B cell (primary cell): ENCODE measurements at regions of chr11 and their contacts with region 1.

Region 1: GRCh38 chr11:14892036-14892567 is at the start of gene CYP2R1:
- DNase-seq: peak; percentile 93
- ATAC-seq: peak; percentile 85
- H3K4me3 ChIP-seq: peak within 1 kb of the TSS; percentile 82 to 91 (median 87)
- H3K4me3 Mint-ChIP-seq: peak within 1 kb of the TSS; percentile 99
- H3K27ac ChIP-seq: peak within 1 kb of the TSS; percentile 78 to 83
- H3K27ac Mint-ChIP-seq: peak within 1 kb of the TSS; percentile 97
- H3K4me1 ChIP-seq: peaks cover 4 to 5% of the 10 kb centered on the region in 2 donors
- H3K4me1 Mint-ChIP-seq: peaks cover 30% of the 10 kb centered on the region
- H3K27me3 ChIP-seq: no peaks in the 10 kb centered on the region
- H3K27me3 Mint-ChIP-seq: no peaks in the 10 kb centered on the region
- CTCF ChIP-seq: no peak
- total RNA-seq, gene CYP2R1: 42.4 and 43.6 TPM in 2 replicates

Region 2: DNA sequence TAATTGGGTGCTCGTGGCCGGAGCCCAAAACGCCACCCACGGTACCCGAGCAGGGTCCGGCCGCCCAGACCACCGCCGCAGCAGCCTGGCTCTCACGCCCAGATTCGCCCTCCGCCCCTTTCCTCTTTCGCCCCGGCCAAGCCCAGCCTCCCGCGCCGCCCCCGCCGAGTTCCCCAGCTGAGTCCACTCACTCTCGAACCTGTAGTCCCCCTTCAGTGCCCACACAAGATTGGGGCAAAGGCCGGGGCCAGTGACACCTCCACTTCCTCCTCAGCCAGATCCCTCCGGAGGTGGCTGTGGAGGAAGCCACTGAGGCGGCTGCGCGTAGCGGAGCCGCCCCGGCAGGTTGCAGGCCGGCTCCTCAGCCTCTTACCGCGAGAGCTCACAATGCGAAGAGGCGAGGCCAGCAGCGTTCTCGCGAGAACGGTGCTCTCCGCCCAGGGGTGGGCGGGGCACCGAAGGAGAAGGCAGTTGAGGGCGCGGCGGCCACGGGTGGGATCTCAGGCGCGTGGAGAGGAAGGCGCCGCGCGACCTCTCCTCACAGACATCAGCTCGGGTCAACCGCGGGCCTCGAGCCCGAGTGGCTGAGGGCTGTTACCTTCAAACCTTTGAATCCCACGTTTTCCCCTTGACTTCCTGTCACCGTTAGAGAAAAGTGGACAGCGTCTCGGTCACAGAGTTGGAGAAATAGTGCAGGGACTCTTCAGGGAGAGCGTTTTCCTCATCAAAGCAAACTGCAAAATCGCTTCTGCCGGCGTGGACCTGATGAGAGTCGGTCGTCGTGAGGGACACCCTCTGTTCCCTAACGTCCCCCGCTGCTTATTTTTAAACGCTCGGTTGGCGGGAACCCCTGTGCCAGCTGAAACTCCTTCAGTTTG is 1429.0 kb before region 1 on chr11 and contains the start of gene BTBD10:
- CTCF ChIA-PET with region 1: no interaction called
- POLR2A ChIA-PET with region 1: no interaction called
- intact Hi-C with region 1: loop called (anchors 5 kb)
- DNase-seq: peak; percentile 97
- ATAC-seq: peak; percentile 98
- H3K4me3 ChIP-seq: peak within 1 kb of the TSS; percentile 87 to 94 (median 88)
- H3K4me3 Mint-ChIP-seq: peak within 1 kb of the TSS; percentile 99
- H3K27ac ChIP-seq: peak within 1 kb of the TSS; percentile 83 to 93
- H3K27ac Mint-ChIP-seq: peak within 1 kb of the TSS; percentile 97
- H3K4me1 ChIP-seq: peaks cover 17 to 18% of the 10 kb centered on the region in 2 donors
- H3K4me1 Mint-ChIP-seq: peaks cover 46% of the 10 kb centered on the region
- H3K27me3 ChIP-seq: no peaks in the 10 kb centered on the region
- H3K27me3 Mint-ChIP-seq: no peaks in the 10 kb centered on the region
- CTCF ChIP-seq: no peak
- total RNA-seq, gene BTBD10: 19.6 and 22.8 TPM in 2 replicates

Region 3: GRCh38 chr11:14499554-14500180 is 392.4 kb before region 1 on chr11 and contains the start of gene COPB1:
- CTCF ChIA-PET with region 1: interaction called, 5 read pairs
- POLR2A ChIA-PET with region 1: interaction called, 9 read pairs
- intact Hi-C with region 1: loop called (anchors 1 kb)
- DNase-seq: peak; percentile 95
- ATAC-seq: peak; percentile 96
- H3K4me3 ChIP-seq: peak within 1 kb of the TSS; percentile 75 to 91 (median 86)
- H3K4me3 Mint-ChIP-seq: peak within 1 kb of the TSS; percentile 97
- H3K27ac ChIP-seq: peak within 1 kb of the TSS; percentile 76 to 85
- H3K27ac Mint-ChIP-seq: peak within 1 kb of the TSS; percentile 94
- H3K4me1 ChIP-seq: peaks cover 6 to 10% of the 10 kb centered on the region in 2 donors
- H3K4me1 Mint-ChIP-seq: peaks cover 36% of the 10 kb centered on the region
- H3K27me3 ChIP-seq: no peaks in the 10 kb centered on the region
- H3K27me3 Mint-ChIP-seq: no peaks in the 10 kb centered on the region
- CTCF ChIP-seq: no peak
- total RNA-seq, gene COPB1: 80.2 and 87.6 TPM in 2 replicates

Region 4: GRCh38 chr11:14578541-14578956 is 313.6 kb before region 1 on chr11:
- CTCF ChIA-PET with region 1: no interaction called
- POLR2A ChIA-PET with region 1: no interaction called
- intact Hi-C with region 1: loop called (anchors 5 kb)
- DNase-seq: peak; percentile 90
- ATAC-seq: peak; percentile 99
- H3K4me3 ChIP-seq: peak overlapping the region in 1 of 5 experiments; percentile 18
- H3K4me3 Mint-ChIP-seq: peak overlapping the region; percentile 51
- H3K27ac ChIP-seq: peak overlapping the region; percentile 59 to 71
- H3K27ac Mint-ChIP-seq: peak overlapping the region; percentile 85
- H3K4me1 ChIP-seq: peaks cover 13 to 22% of the 10 kb centered on the region in 2 donors
- H3K4me1 Mint-ChIP-seq: peaks cover 37% of the 10 kb centered on the region
- H3K27me3 ChIP-seq: no peaks in the 10 kb centered on the region
- H3K27me3 Mint-ChIP-seq: peaks cover 4% of the 10 kb centered on the region
- CTCF ChIP-seq: no peak

Region 5: GRCh38 chr11:14606741-14607140 is 285.4 kb before region 1 on chr11:
- CTCF ChIA-PET with region 1: no interaction called
- POLR2A ChIA-PET with region 1: no interaction called
- intact Hi-C with region 1: no loop called
- DNase-seq: no peak
- ATAC-seq: no peak
- H3K4me3 ChIP-seq: no peak overlapping the region
- H3K4me3 Mint-ChIP-seq: no peak overlapping the region
- H3K27ac ChIP-seq: no peak overlapping the region
- H3K27ac Mint-ChIP-seq: no peak overlapping the region
- H3K4me1 ChIP-seq: no peaks in the 10 kb centered on the region
- H3K4me1 Mint-ChIP-seq: no peaks in the 10 kb centered on the region
- H3K27me3 ChIP-seq: peaks cover 0 to 5% (median 0%) of the 10 kb centered on the region in 4 experiments
- H3K27me3 Mint-ChIP-seq: peaks cover 22% of the 10 kb centered on the region
- CTCF ChIP-seq: no peak

Region 6: DNA sequence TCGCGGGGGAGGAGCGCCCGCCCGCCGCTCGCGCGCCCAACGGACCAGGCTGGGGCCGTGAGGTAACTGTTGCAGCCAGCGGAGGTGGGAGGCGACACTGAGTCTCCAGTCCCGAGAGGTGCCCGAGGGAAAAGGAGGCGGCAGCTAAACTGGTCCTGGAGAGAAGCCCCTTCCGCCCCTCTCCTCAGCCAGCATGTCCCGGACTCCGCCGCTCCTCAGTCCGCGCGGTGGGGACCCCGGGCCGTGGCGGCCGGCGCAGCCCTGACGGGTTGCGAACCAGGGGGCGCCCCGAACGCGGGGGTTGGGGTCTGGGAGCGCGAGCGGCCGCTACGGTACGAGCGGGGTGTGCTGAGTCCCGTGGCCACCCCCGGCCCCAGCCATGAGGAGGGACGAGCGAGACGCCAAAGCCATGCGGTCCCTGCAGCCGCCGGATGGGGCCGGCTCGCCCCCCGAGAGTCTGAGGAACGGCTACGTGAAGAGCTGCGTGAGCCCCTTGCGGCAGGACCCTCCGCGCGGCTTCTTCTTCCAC is 248.3 kb before region 1 on chr11 and contains the start of gene PDE3B:
- CTCF ChIA-PET with region 1: interaction called, 13 read pairs
- POLR2A ChIA-PET with region 1: interaction called, 4 read pairs
- intact Hi-C with region 1: loop called (anchors 5 kb)
- DNase-seq: peak; percentile 72
- ATAC-seq: peak; percentile 74
- H3K4me3 ChIP-seq: peak within 1 kb of the TSS; percentile 58 to 92 (median 73)
- H3K4me3 Mint-ChIP-seq: peak within 1 kb of the TSS; percentile 92
- H3K27ac ChIP-seq: peak within 1 kb of the TSS in 1 of 2 donors; percentile 38
- H3K27ac Mint-ChIP-seq: peak within 1 kb of the TSS; percentile 64
- H3K4me1 ChIP-seq: peaks cover 7 to 17% of the 10 kb centered on the region in 2 donors
- H3K4me1 Mint-ChIP-seq: peaks cover 9% of the 10 kb centered on the region
- H3K27me3 ChIP-seq: peaks cover 0 to 29% (median 14%) of the 10 kb centered on the region in 4 experiments
- H3K27me3 Mint-ChIP-seq: peaks cover 40% of the 10 kb centered on the region
- CTCF ChIP-seq: peak; percentile 3
- total RNA-seq, gene PDE3B: 60.7 and 70.7 TPM in 2 replicates

Region 7: DNA sequence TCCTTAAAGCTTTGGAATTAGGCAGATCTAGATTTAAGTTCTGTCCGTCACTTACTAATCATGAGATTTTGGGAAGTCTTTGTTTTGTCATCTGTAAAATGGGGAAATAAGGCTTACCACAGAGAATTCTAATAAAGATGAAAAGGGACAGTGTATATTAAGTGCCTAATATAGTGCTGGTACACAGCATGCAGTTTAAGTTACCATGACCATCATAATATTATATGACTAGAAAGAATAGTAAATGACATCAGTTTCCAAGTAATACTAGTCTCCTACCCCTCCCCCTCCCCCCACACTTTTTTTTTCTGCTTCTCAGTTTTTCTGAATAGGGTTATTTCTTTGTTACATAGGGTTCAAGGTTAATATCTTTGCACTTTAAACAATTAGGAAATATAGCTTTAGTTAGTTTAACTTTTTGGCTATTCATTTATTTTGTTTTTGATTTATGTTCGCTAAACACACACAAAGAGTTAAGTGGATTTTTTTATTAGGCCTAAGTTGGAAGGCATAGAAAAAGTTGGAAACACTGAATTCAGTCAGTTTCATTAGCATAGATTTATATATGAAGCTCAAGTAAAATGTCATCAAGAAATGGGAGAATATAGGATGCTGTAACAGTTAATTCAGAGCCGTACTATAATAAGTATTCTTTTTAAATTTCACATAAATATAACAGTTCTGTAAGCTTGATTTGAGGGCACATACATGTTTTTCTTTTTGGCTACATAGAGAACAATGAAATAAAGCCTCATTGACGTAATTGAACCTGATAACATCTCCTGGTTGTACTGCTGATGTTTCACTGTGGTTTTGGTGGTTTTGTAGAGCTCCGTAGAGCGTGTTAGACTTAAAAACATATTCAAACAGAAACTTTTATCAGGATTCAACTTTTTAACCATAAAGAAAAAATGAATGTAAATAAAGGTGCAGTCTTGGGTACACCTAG is 127.2 kb before region 1 on chr11:
- CTCF ChIA-PET with region 1: interaction called, 12 read pairs
- POLR2A ChIA-PET with region 1: interaction called, 4 read pairs
- intact Hi-C with region 1: loop called (anchors 5 kb)
- DNase-seq: peak; percentile 81
- ATAC-seq: peak; percentile 88
- H3K4me3 ChIP-seq: peak overlapping the region in 1 of 5 experiments; percentile 0
- H3K4me3 Mint-ChIP-seq: peak overlapping the region; percentile 30
- H3K27ac ChIP-seq: peak overlapping the region; percentile 1 to 8
- H3K27ac Mint-ChIP-seq: peak overlapping the region; percentile 7
- H3K4me1 ChIP-seq: peaks cover 17 to 25% of the 10 kb centered on the region in 2 donors
- H3K4me1 Mint-ChIP-seq: peaks cover 18% of the 10 kb centered on the region
- H3K27me3 ChIP-seq: peaks cover 0 to 6% (median 5%) of the 10 kb centered on the region in 4 experiments
- H3K27me3 Mint-ChIP-seq: no peaks in the 10 kb centered on the region
- CTCF ChIP-seq: no peak